GM12878 (cell line): ENCODE measurements at regions of chr11 and their contacts with region 1.

Region 1: GRCh38 chr11:69675811-69676371 is 738 bp upstream of the LTO1 start:
- DNase-seq: no peak
- ATAC-seq: no peak
- H3K4me3 ChIP-seq: 0 out of 2 replicates have a peak overlapping the region, but pooled peaks have one; percentile 86
- H3K27ac ChIP-seq: no peak overlapping the region
- H3K4me1 ChIP-seq: no peaks in the 10 kb centered on the region; the same call in 1 of the 2 replicates
- H3K27me3 ChIP-seq: no peaks in the 10 kb centered on the region
- CTCF ChIP-seq: no peak
- EP300 ChIP-seq: no peak
- POLR2A ChIP-seq: no peak
- RAD21 ChIP-seq: no peak

Region 2: GRCh38 chr11:69711822-69712801 is 36.2 kb after region 1 on chr11:
- CTCF ChIA-PET with region 1: no interaction called
- POLR2A ChIA-PET with region 1: interaction called, 11 read pairs
- RAD21 ChIA-PET with region 1: no interaction called
- SMC1A ChIA-PET with region 1: no interaction called
- in situ Hi-C with region 1: no loop called
- intact Hi-C with region 1: no loop called
- DNase-seq: no peak
- ATAC-seq: no peak
- H3K4me3 ChIP-seq: no peak overlapping the region
- H3K27ac ChIP-seq: no peak overlapping the region
- H3K4me1 ChIP-seq: no peaks in the 10 kb centered on the region
- H3K27me3 ChIP-seq: peaks cover 0 to 2% of the 10 kb centered on the region in 2 experiments; a peak in 2 of 4 replicates
- CTCF ChIP-seq: no peak
- EP300 ChIP-seq: no peak
- POLR2A ChIP-seq: no peak
- RAD21 ChIP-seq: no peak